ENCODE measurements at regions of chr13 and their contacts with region 1.

Region 1: GRCh38 chr13:29969286-29969685 is 118.9 kb upstream of the UBL3 start:
- DNase-seq: no peak
- ATAC-seq: no peak

Region 2: DNA sequence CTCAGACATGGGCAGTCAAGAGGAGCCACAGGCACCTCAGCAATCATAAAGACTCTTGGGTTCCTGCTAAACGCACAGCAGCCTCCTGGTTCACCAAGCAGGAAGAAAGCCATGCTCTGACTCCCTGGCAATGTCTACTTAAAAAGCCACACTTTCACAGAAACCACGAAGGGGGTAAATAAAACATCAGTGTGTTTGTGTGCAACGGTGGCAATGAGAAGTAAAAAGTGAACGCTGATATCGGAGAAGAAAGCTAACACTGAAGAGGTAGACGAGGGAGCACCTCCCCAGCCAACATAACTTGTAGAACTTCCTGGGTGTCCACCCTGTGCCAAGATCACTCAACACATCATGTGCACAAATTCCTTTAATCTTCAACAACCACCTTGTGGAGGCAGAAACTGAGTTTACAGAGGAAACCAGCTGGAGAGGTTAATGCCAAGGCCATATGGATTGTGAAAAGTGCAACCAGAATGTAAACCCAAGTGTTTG is 1162.2 kb after region 1 on chr13:
- intact Hi-C with region 1: loop called (anchors 5 kb)
- DNase-seq: no peak
- ATAC-seq: no peak